Endothelial cell of umbilical vein (primary cell): ENCODE measurements at regions of chr1 and their contacts with region 1.

Region 1: DNA sequence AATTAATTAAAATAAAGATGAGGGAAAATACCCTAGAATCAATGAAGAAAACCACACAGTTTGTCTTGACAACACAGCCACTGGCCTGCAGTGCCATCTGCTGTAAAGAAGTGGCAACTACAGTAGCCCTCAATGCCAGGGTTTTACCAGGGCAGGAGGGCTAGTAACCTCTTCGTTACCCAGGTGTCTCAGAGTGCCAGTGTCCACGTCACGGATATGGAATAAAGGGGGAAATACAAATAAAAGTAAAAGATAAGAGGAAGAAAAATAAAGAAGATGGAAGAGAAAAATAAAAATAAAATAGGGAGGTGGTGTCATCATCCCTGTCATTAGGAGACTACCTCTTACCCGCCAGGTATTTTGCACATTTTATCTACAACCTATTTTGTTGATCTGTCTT is 14.2 kb upstream of the SLC44A3 start:
- DNase-seq: peak; percentile 58
- H3K4me3 ChIP-seq: peak overlapping the region in 1 of 3 experiments; percentile 38
- H3K27ac ChIP-seq: no peak overlapping the region
- H3K4me1 ChIP-seq: peaks cover 30% of the 10 kb centered on the region
- H3K27me3 ChIP-seq: peaks cover under 1 to 6% of the 10 kb centered on the region in 2 experiments
- CTCF ChIP-seq: peak; percentile 82 to 87
- POLR2A ChIP-seq: no peak

Region 2: GRCh38 chr1:94481473-94481933 is 324.4 kb before region 1 on chr1:
- CTCF ChIA-PET with region 1: interaction called, 205 read pairs
- POLR2A ChIA-PET with region 1: no interaction called
- dilution Hi-C with region 1: no loop called
- intact Hi-C with region 1: loop called (anchors 1 kb)
- DNase-seq: peak; percentile 67
- H3K4me3 ChIP-seq: no peak overlapping the region
- H3K27ac ChIP-seq: no peak overlapping the region
- H3K4me1 ChIP-seq: no peaks in the 10 kb centered on the region
- H3K27me3 ChIP-seq: no peaks in the 10 kb centered on the region
- CTCF ChIP-seq: peak; percentile 83 to 86
- POLR2A ChIP-seq: no peak

Region 3: DNA sequence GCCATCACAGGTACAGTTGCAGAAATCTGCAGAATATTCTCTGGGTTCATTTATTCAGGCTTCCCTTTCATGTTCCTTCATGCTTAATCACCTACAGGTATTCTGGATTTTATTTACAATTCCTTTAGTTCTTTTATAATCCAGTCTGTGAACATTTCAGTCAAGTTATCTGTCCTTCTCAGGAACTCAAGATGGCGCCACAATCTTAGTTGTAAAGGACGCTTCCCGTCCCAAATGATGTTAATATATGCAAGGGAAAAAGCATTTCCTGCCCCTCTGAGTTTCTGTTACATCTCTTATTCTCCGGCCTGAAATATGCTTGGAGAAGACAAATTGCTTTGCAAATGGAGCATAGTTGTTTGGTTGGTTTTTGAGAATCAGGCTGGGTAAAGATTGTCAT is 283.6 kb before region 1 on chr1:
- CTCF ChIA-PET with region 1: interaction called, 109 read pairs
- POLR2A ChIA-PET with region 1: no interaction called
- dilution Hi-C with region 1: loop called (anchors 25 kb)
- intact Hi-C with region 1: loop called (anchors 1 kb)
- DNase-seq: peak; percentile 52
- H3K4me3 ChIP-seq: no peak overlapping the region
- H3K27ac ChIP-seq: no peak overlapping the region
- H3K4me1 ChIP-seq: no peaks in the 10 kb centered on the region
- H3K27me3 ChIP-seq: no peaks in the 10 kb centered on the region
- CTCF ChIP-seq: peak in 1 of 2 donors; percentile 28
- POLR2A ChIP-seq: no peak

Region 4: DNA sequence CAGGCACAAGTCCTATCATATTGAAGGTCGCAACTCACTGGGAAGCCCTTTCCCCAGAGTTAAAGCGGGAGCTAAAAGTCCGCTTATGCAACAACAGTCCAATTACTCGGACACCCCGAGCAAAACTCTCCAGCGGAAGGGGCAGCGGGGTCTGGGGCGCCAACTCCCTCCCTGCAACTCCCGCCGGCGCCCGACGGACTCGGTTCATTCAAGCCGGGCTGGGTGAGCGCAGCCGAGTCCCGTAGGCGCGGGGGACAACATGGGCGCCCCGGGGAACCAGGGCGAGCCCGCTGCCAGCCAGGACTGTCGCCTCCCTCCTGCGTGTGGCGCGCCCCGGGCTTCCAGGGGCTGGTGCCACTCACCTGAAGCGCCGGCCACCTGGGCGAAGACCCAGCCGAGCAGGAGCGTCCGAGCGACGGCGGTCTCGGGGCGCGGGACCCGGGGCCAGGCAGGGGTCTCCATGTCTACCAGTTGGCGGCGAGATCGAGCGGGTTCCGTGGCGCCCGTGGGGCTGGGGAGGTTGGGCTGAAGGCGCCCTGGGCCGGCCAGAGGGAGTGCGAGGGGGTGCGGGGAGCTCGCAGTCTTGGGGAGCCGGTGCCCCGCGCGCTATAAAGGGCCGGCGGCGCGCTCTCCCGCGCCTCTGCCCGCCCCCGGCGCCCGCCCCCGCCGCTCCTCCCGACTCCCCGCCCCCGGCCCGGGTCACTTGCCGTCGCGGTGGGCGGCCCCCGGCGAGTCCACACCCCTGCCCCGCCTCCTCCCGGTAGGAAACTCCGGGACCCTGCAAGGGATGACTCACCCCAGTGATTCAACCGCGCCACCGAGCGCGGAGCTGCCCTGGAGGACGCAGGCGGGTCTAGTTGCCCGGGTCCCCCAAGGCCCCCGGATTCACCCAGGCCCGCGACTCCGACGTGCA is 264.5 kb before region 1 on chr1 and contains the start of gene F3:
- CTCF ChIA-PET with region 1: interaction called, 5 read pairs
- POLR2A ChIA-PET with region 1: no interaction called
- dilution Hi-C with region 1: loop called (anchors 25 kb)
- intact Hi-C with region 1: no loop called
- DNase-seq: peak; percentile 87
- H3K4me3 ChIP-seq: peak within 1 kb of the TSS; percentile 41 to 59 (median 59)
- H3K27ac ChIP-seq: peak within 1 kb of the TSS; percentile 23
- H3K4me1 ChIP-seq: peaks cover 24% of the 10 kb centered on the region
- H3K27me3 ChIP-seq: no peaks in the 10 kb centered on the region
- CTCF ChIP-seq: no peak
- POLR2A ChIP-seq: no peak
- total RNA-seq, gene F3: 1.9 and 2.3 TPM in 2 replicates

Region 5: GRCh38 chr1:94926915-94927404 is 121.0 kb after region 1 on chr1 and contains the start of gene CNN3:
- CTCF ChIA-PET with region 1: no interaction called
- POLR2A ChIA-PET with region 1: no interaction called
- dilution Hi-C with region 1: no loop called
- intact Hi-C with region 1: loop called (anchors 5 kb)
- DNase-seq: peak; percentile 93
- H3K4me3 ChIP-seq: peak within 1 kb of the TSS; percentile 75 to 99 (median 90)
- H3K27ac ChIP-seq: peak within 1 kb of the TSS; percentile 100
- H3K4me1 ChIP-seq: peaks cover 49% of the 10 kb centered on the region
- H3K27me3 ChIP-seq: no peaks in the 10 kb centered on the region
- CTCF ChIP-seq: no peak
- POLR2A ChIP-seq: peak; percentile 93
- total RNA-seq, gene CNN3: 317 and 392 TPM in 2 replicates